Activated CD4-positive, alpha-beta T cell treated with anti-CD3 and anti-CD28 coated beads for 36 hours (primary cell): ENCODE measurements at regions of chr17 and their contacts with region 1.

Region 1: GRCh38 chr17:42997984-42998938 is at the start of gene RPL27:
- DNase-seq: peak; percentile 98
- ATAC-seq: peak; percentile 98
- H3K4me3 Mint-ChIP-seq: peak within 1 kb of the TSS; percentile 95
- H3K27ac Mint-ChIP-seq: peak within 1 kb of the TSS; percentile 99
- H3K4me1 Mint-ChIP-seq: peaks cover 31% of the 10 kb centered on the region
- H3K27me3 Mint-ChIP-seq: no peaks in the 10 kb centered on the region
- total RNA-seq, gene RPL27: 1,703 to 2,161 TPM

Region 2: GRCh38 chr17:41688699-41689496 is 1309.4 kb before region 1 on chr17 and contains the start of gene EIF1:
- CTCF ChIA-PET with region 1: no interaction called
- POLR2A ChIA-PET with region 1: no interaction called
- intact Hi-C with region 1: loop called in 1 of 2 experiments (anchors 5 kb)
- DNase-seq: peak; percentile 100
- ATAC-seq: peak; percentile 81
- H3K4me3 Mint-ChIP-seq: peak within 1 kb of the TSS; percentile 97
- H3K27ac Mint-ChIP-seq: peak within 1 kb of the TSS; percentile 95
- H3K4me1 Mint-ChIP-seq: peaks cover 20% of the 10 kb centered on the region
- H3K27me3 Mint-ChIP-seq: no peaks in the 10 kb centered on the region
- total RNA-seq, gene EIF1: 869 to 977 TPM

Region 3: DNA sequence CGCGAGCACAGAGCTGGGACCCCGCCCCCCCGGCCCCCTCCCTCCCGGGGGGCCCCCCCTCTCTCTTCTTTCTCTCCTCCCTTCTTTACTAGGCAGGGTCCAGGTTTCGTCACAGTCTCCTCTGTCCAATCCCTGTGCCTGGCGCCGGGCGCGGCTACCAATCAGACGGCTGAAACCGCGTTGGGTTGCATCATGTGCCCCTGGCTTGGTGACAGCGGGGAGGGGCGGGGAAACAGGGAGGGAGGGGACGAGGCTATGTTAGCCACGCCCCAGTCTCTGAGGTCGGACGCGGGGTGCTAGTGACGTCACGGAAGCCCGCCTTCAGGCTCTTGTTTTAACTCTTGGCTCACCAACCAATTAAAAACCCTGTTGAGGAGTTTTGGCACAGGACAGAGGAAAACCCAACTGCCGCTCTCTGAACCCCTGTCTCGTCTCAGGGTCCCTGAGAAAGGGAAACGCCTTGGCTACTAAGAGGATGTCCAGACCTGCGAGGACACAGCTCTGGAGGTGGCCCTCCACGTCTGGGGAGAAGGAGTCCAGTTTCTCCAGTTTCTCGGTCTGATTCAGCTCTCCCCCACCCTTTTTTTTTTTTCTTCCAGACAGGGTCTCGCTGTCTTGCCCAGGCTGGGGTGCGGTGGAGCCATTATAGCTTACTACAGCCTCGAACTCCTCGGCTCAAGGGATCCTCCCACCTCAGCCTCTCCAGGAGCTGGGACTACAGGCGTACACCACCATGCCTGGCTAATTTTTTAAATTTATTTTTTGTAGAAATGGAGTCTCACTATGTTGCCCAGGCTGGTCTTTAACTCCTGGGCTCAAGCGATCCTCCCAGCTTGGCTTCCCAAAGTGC is 321.0 kb before region 1 on chr17:
- CTCF ChIA-PET with region 1: interaction called, 5 read pairs
- POLR2A ChIA-PET with region 1: no interaction called
- intact Hi-C with region 1: loop called in 1 of 2 experiments (anchors 1 kb)
- DNase-seq: peak; percentile 100
- ATAC-seq: peak; percentile 84
- H3K4me3 Mint-ChIP-seq: peak overlapping the region; percentile 70
- H3K27ac Mint-ChIP-seq: peak overlapping the region; percentile 69
- H3K4me1 Mint-ChIP-seq: peaks cover 49% of the 10 kb centered on the region
- H3K27me3 Mint-ChIP-seq: peaks cover 29% of the 10 kb centered on the region

Region 4: GRCh38 chr17:42832974-42833766 is 165.1 kb before region 1 on chr17 and contains the start of gene PSME3:
- CTCF ChIA-PET with region 1: interaction called, 9 read pairs
- POLR2A ChIA-PET with region 1: no interaction called
- intact Hi-C with region 1: loop called (anchors 1 to 5 kb)
- DNase-seq: peak; percentile 94
- ATAC-seq: peak; percentile 90
- H3K4me3 Mint-ChIP-seq: peak within 1 kb of the TSS; percentile 96
- H3K27ac Mint-ChIP-seq: peak within 1 kb of the TSS; percentile 98
- H3K4me1 Mint-ChIP-seq: peaks cover 18% of the 10 kb centered on the region
- H3K27me3 Mint-ChIP-seq: no peaks in the 10 kb centered on the region
- total RNA-seq, gene PSME3: 116 to 118 TPM

Region 5: GRCh38 chr17:42937712-42938596 is 60.3 kb before region 1 on chr17:
- CTCF ChIA-PET with region 1: no interaction called
- POLR2A ChIA-PET with region 1: no interaction called
- intact Hi-C with region 1: no loop called
- DNase-seq: peak; percentile 50
- ATAC-seq: no peak
- H3K4me3 Mint-ChIP-seq: no peak overlapping the region
- H3K27ac Mint-ChIP-seq: no peak overlapping the region
- H3K4me1 Mint-ChIP-seq: no peaks in the 10 kb centered on the region
- H3K27me3 Mint-ChIP-seq: peaks cover 4% of the 10 kb centered on the region

Region 6: GRCh38 chr17:43024407-43025289 is 26.4 kb after region 1 on chr17 and contains the start of gene RND2:
- CTCF ChIA-PET with region 1: interaction called, 14 read pairs
- POLR2A ChIA-PET with region 1: interaction called, 7 read pairs
- intact Hi-C with region 1: loop called in 1 of 2 experiments (anchors 1 kb)
- DNase-seq: peak; percentile 89
- ATAC-seq: peak; percentile 68
- H3K4me3 Mint-ChIP-seq: peak within 1 kb of the TSS; percentile 78
- H3K27ac Mint-ChIP-seq: peak within 1 kb of the TSS; percentile 71
- H3K4me1 Mint-ChIP-seq: peaks cover 26% of the 10 kb centered on the region
- H3K27me3 Mint-ChIP-seq: no peaks in the 10 kb centered on the region
- total RNA-seq, gene RND2: 0.05 to 0.16 TPM

Region 7: DNA sequence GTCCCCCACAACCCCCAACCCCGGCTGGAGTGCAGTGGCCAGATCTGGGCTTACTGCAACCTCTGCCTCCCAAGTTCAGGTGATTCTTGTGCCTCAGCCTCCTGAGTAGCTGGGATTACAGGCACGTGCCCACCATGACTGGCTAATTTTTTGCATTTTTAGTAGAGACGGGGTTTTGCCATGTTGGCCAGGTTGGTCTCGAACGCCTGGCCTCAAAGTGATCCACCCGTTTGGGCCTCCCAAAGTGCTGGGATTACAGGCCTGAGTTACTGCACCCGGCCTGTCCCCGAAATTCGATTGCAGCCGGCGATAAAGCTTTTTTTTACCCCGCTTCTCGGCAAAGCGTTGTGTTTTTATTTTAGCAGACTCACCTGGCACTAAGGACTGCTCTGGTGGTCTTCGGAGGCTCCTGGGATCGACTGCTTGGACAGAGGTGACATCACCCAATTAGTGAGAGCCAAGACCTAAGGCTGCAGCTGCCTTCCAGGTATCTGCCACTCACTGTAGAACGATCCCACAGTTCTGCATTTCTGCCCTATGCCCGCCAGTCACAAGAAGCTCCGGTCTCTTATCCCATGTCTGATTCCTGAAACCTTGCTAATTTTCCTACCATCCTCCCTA is 318.4 kb after region 1 on chr17:
- CTCF ChIA-PET with region 1: no interaction called
- POLR2A ChIA-PET with region 1: interaction called, 35 read pairs
- intact Hi-C with region 1: loop called in 1 of 2 experiments (anchors 5 kb)
- DNase-seq: peak; percentile 38
- ATAC-seq: no peak
- H3K4me3 Mint-ChIP-seq: no peak overlapping the region
- H3K27ac Mint-ChIP-seq: no peak overlapping the region
- H3K4me1 Mint-ChIP-seq: peaks cover 11% of the 10 kb centered on the region
- H3K27me3 Mint-ChIP-seq: no peaks in the 10 kb centered on the region